ENCODE measurements at regions of chr6 and their contacts with region 1.

Region 1: GRCh38 chr6:118618679-118619377 is 32.6 kb downstream of the CEP85L start:
- DNase-seq: peak; percentile 76
- H3K4me3 Mint-ChIP-seq: no peak overlapping the region
- H3K27ac Mint-ChIP-seq: no peak overlapping the region
- H3K4me1 Mint-ChIP-seq: peaks cover 34% of the 10 kb centered on the region
- H3K27me3 Mint-ChIP-seq: no peaks in the 10 kb centered on the region

Region 2: GRCh38 chr6:118283766-118284165 is 335.1 kb before region 1 on chr6:
- CTCF ChIA-PET with region 1: interaction called, 3 read pairs
- POLR2A ChIA-PET with region 1: no interaction called
- intact Hi-C with region 1: loop called (anchors 1 kb)
- DNase-seq: peak; percentile 39
- H3K4me3 Mint-ChIP-seq: no peak overlapping the region
- H3K27ac Mint-ChIP-seq: no peak overlapping the region
- H3K4me1 Mint-ChIP-seq: no peaks in the 10 kb centered on the region
- H3K27me3 Mint-ChIP-seq: no peaks in the 10 kb centered on the region

Region 3: GRCh38 chr6:118565311-118565960 is 53.4 kb before region 1 on chr6:
- CTCF ChIA-PET with region 1: interaction called, 8 read pairs
- POLR2A ChIA-PET with region 1: no interaction called
- intact Hi-C with region 1: loop called (anchors 1 kb)
- DNase-seq: no peak
- H3K4me3 Mint-ChIP-seq: no peak overlapping the region
- H3K27ac Mint-ChIP-seq: peak overlapping the region; percentile 11
- H3K4me1 Mint-ChIP-seq: peaks cover 17% of the 10 kb centered on the region
- H3K27me3 Mint-ChIP-seq: no peaks in the 10 kb centered on the region